ENCODE measurements at regions of chr1 and their contacts with region 1.

Region 1: GRCh38 chr1:27858072-27858958 is 14.0 kb upstream of the THEMIS2 start:
- DNase-seq: peak; percentile 62 to 89 (median 81)
- ATAC-seq: peak; percentile 96 to 98 (median 97)
- H3K4me3 ChIP-seq: no peak overlapping the region
- H3K4me3 Mint-ChIP-seq: peak overlapping the region in 1 of 3 donors; percentile 3
- H3K27ac ChIP-seq: no peak overlapping the region
- H3K27ac Mint-ChIP-seq: peak overlapping the region; percentile 55 to 57
- H3K4me1 ChIP-seq: peaks cover 6 to 19% of the 10 kb centered on the region in 2 experiments
- H3K4me1 Mint-ChIP-seq: peaks cover 9 to 35% (median 35%) of the 10 kb centered on the region in 3 donors
- H3K27me3 ChIP-seq: peaks cover 0 to 3% of the 10 kb centered on the region in 2 experiments
- H3K27me3 Mint-ChIP-seq: no peaks in the 10 kb centered on the region

Region 2: GRCh38 chr1:27704958-27705357 is 153.4 kb before region 1 on chr1:
- CTCF ChIA-PET with region 1: no interaction called
- POLR2A ChIA-PET with region 1: no interaction called
- DNase-seq: no peak
- ATAC-seq: no peak
- H3K4me3 ChIP-seq: no peak overlapping the region
- H3K4me3 Mint-ChIP-seq: no peak overlapping the region
- H3K27ac ChIP-seq: no peak overlapping the region
- H3K27ac Mint-ChIP-seq: no peak overlapping the region
- H3K4me1 ChIP-seq: no peaks in the 10 kb centered on the region
- H3K4me1 Mint-ChIP-seq: no peaks in the 10 kb centered on the region
- H3K27me3 ChIP-seq: peaks cover 0 to 4% of the 10 kb centered on the region in 2 experiments
- H3K27me3 Mint-ChIP-seq: peaks cover 3 to 9% of the 10 kb centered on the region in 2 donors

Region 3: DNA sequence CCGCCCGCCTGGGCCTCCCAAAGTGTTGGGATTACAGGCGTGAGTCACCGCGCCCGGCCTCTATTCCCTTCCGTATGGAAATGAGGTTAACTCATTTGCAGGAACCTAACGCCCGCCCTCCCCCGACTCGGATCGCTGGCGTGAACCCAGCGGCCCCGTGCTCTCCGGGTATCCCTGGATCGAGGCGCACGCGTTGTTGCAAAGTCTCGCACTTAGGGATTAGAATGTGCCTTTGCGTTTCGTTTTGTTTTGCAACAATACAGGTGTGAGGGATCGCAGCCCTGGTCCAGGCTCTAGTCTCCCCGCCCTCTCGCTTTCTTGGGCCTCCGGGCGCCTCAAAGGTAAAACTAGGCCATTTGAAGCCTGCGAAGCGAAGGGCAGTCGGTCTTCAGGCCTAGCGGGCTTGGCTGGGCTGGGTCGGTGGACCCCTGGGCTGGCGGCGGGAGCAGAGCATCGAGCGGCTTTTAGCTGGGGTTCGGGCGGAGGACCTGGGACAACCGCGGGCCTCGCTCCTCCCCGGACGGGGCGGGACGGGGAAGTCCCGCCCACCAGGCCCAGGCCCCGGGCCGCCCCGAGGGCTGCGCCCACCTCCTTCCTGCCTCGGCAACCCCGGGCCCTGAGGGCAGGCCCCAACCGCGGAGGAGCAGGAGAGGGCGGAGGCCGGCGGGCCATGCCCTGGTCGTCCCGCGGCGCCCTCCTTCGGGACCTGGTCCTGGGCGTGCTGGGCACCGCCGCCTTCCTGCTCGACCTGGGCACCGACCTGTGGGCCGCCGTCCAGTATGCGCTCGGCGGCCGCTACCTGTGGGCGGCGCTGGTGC is 101.3 kb after region 1 on chr1 and contains the start of gene XKR8:
- CTCF ChIA-PET with region 1: no interaction called
- POLR2A ChIA-PET with region 1: no interaction called
- DNase-seq: peak; percentile 71 to 90 (median 81)
- ATAC-seq: peak; percentile 99
- H3K4me3 ChIP-seq: peak within 1 kb of the TSS; percentile 69 to 77
- H3K4me3 Mint-ChIP-seq: peak within 1 kb of the TSS; percentile 84 to 87 (median 84)
- H3K27ac ChIP-seq: peak within 1 kb of the TSS; percentile 67
- H3K27ac Mint-ChIP-seq: peak within 1 kb of the TSS; percentile 92 to 94
- H3K4me1 ChIP-seq: peaks cover 5 to 32% of the 10 kb centered on the region in 2 experiments
- H3K4me1 Mint-ChIP-seq: peaks cover 29 to 32% (median 32%) of the 10 kb centered on the region in 3 donors
- H3K27me3 ChIP-seq: peaks cover 0 to 11% of the 10 kb centered on the region in 2 experiments
- H3K27me3 Mint-ChIP-seq: no peaks in the 10 kb centered on the region
- total RNA-seq, gene XKR8: 7.7 to 18.3 (median 14.4) TPM

Region 4: GRCh38 chr1:27979151-27979858 is 121.0 kb after region 1 on chr1:
- CTCF ChIA-PET with region 1: interaction called, 4 to 12 read pairs
- POLR2A ChIA-PET with region 1: no interaction called
- DNase-seq: peak in 3 of 35 experiments; percentile 19 to 72 (median 26)
- ATAC-seq: peak; percentile 66 to 73 (median 72)
- H3K4me3 ChIP-seq: no peak overlapping the region
- H3K4me3 Mint-ChIP-seq: no peak overlapping the region
- H3K27ac ChIP-seq: no peak overlapping the region
- H3K27ac Mint-ChIP-seq: no peak overlapping the region
- H3K4me1 ChIP-seq: no peaks in the 10 kb centered on the region
- H3K4me1 Mint-ChIP-seq: no peaks in the 10 kb centered on the region
- H3K27me3 ChIP-seq: no peaks in the 10 kb centered on the region
- H3K27me3 Mint-ChIP-seq: no peaks in the 10 kb centered on the region

Region 5: GRCh38 chr1:27999055-27999454 is 140.7 kb after region 1 on chr1:
- CTCF ChIA-PET with region 1: no interaction called
- POLR2A ChIA-PET with region 1: no interaction called
- DNase-seq: no peak
- ATAC-seq: no peak
- H3K4me3 ChIP-seq: no peak overlapping the region
- H3K4me3 Mint-ChIP-seq: no peak overlapping the region
- H3K27ac ChIP-seq: no peak overlapping the region
- H3K27ac Mint-ChIP-seq: no peak overlapping the region
- H3K4me1 ChIP-seq: peaks cover 0 to 3% of the 10 kb centered on the region in 2 experiments
- H3K4me1 Mint-ChIP-seq: peaks cover 4 to 9% (median 8%) of the 10 kb centered on the region in 3 donors
- H3K27me3 ChIP-seq: no peaks in the 10 kb centered on the region
- H3K27me3 Mint-ChIP-seq: no peaks in the 10 kb centered on the region